ENCODE measurements at regions of chr3 and their contacts with region 1.

Region 1: DNA sequence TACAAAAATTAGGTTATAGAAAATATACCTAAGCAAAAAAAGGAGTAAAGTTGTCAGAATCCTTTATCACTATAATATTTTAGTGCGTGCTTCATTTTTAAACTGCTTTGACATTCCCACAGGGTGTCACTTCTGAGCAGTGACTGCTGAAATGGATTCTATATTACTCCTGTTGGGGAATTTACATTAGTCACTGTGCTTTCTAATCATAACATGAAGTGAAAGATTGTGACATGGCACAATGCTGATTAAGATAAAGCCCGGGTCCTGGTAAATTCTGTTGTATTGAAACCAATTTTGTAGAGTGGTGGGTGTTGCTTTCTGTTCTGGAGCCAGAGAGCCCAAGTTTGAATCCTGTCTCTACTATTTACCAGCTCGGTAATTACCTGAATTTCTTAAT is 36.4 kb upstream of the EHHADH start:
- H3K4me3 Mint-ChIP-seq: no peak overlapping the region
- H3K27ac Mint-ChIP-seq: no peak overlapping the region
- H3K4me1 Mint-ChIP-seq: peaks cover 1% of the 10 kb centered on the region
- H3K27me3 Mint-ChIP-seq: no peaks in the 10 kb centered on the region

Region 2: DNA sequence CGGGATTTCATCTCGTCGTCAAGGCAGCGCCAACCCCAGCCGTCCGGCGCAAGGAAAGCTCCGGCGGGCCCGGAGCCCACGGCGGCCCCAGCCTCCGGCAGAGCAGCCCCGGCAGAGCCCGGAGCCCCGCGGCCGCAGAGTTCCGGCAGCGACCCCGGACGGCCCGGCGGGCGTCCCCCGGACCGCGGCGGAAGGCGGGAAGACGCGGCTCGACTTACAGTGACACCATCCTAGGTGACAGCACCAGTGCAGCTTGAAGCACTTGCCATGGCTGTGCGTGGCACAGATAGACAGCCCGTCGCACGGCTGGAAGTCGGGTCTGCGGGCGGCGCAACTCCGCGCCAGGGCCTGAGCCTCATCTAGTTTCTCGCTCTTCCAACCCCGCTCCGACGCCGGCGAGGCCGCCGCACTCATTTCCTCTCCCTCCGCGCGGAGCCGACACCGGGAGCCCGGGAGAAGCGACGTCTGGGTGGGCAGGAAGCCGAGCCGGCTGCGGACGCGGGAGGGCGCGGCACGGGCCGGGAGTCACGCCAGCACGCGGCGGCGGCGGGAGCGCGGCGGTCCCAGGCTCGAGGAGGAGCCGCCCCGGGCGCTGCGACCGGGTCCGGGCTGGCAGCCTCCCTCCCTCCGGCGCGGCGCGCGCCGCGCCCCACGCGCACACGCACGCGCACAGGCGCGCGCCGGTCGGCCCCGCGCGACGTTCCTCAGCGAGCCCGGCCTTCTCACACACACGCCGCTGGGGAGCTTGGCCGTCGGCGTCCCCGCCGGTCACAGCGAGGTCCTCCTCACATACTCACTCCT is 137.7 kb before region 1 on chr3 and contains the start of gene C3orf70:
- intact Hi-C with region 1: loop called (anchors 10 kb)
- H3K4me3 Mint-ChIP-seq: peak within 1 kb of the TSS; percentile 66
- H3K27ac Mint-ChIP-seq: peak within 1 kb of the TSS; percentile 15
- H3K4me1 Mint-ChIP-seq: peaks cover 10% of the 10 kb centered on the region
- H3K27me3 Mint-ChIP-seq: peaks cover 36% of the 10 kb centered on the region

Measured in dendritic cell treated with granulocyte-macrophage colony-stimulating factor and Interleukin-4, amounts not matched to agents 40 ng/mL and 50 ng/mL, for 4 days (primary cell).